Activated naive CD4-positive, alpha-beta T cell treated with anti-CD3 and anti-CD28 coated beads, Interleukin-2, amount 10 ng/mL, durations not matched to agents 7 days and 5 days (primary cell): ENCODE measurements at regions of chr12 and their contacts with region 1.

Region 1: GRCh38 chr12:54993161-54993835 is 8.7 kb upstream of the TESPA1 start:
- DNase-seq: peak; percentile 67
- H3K4me3 Mint-ChIP-seq: no peak overlapping the region
- H3K27ac Mint-ChIP-seq: no peak overlapping the region
- H3K4me1 Mint-ChIP-seq: peaks cover 43% of the 10 kb centered on the region
- H3K27me3 Mint-ChIP-seq: peaks cover 5% of the 10 kb centered on the region

Region 2: DNA sequence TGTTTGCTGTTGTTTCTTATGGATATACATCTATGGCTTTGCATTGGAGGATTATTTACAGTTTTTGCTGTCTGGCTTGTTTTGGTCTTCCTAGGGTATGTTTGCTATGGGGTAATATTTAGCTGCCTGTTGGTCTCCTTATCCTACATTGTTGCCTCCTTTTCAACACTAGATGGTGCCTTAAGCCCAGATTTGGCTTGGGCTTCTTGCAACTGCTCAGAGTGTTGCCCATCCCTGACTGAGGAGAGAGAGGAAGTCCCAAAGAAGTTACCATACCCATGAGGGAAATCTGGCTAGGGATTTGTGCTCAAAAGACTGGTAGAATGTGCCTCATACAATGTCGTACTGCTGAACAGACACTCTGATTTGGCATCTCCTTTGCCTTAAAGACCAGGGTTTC is 233.5 kb before region 1 on chr12:
- CTCF ChIA-PET with region 1: interaction called, 12 read pairs
- DNase-seq: peak; percentile 38
- H3K4me3 Mint-ChIP-seq: no peak overlapping the region
- H3K27ac Mint-ChIP-seq: no peak overlapping the region
- H3K4me1 Mint-ChIP-seq: peaks cover 22% of the 10 kb centered on the region
- H3K27me3 Mint-ChIP-seq: no peaks in the 10 kb centered on the region

Region 3: DNA sequence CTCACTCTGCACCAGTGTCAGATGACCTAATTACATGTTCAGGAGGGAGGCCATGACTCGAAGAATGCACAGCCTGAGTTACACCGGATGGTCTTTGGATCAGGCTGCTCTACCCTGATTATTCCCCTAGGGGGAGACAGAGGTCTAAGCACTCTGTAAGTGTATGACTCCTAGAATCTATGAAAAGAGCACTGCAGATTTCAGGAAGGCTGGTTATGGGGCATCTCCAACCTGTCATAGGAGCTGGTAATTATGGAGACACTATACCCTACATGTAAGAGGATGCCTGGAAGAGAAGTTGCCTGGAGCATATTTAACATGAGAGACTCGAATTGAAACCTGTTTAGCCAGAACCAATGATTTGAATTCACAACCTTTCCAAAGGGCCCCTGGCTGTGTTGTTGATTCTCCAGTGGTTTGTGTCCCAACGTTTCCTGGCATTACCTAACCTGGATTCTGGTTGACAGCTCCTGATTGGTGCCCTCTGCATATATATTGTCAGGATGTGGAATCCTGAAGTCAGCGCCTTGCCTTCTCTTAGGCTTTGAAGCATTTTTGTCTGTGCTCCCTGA is 139.2 kb before region 1 on chr12 and contains the start of gene MUCL1:
- CTCF ChIA-PET with region 1: interaction called, 17 read pairs
- DNase-seq: peak; percentile 81
- H3K4me3 Mint-ChIP-seq: no peak within 1 kb of the TSS
- H3K27ac Mint-ChIP-seq: no peak within 1 kb of the TSS
- H3K4me1 Mint-ChIP-seq: peaks cover 3% of the 10 kb centered on the region
- H3K27me3 Mint-ChIP-seq: peaks cover 7% of the 10 kb centered on the region

Region 4: GRCh38 chr12:54958048-54958658 is 35.1 kb before region 1 on chr12:
- CTCF ChIA-PET with region 1: interaction called, 22 read pairs
- DNase-seq: peak; percentile 65
- H3K4me3 Mint-ChIP-seq: no peak overlapping the region
- H3K27ac Mint-ChIP-seq: no peak overlapping the region
- H3K4me1 Mint-ChIP-seq: peaks cover 73% of the 10 kb centered on the region
- H3K27me3 Mint-ChIP-seq: no peaks in the 10 kb centered on the region

Region 5: DNA sequence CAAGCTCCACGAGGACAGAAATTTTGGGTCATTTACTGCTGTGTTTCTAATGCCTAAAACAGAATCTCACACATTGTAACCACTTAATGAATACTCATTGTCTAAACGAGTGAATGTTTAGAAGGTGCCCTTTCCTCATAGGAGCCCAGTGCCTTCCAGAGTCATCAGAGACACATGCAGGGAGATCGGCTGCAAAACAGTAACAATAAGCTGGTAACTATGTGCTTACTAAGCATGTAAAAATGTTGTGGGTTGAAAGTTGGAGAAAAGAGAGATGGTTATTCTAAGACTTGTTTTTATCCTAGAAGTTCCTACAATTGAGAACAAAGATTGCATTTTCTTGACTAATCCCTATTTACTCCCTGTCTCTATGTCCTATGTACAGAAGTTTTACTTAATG is 16.1 kb before region 1 on chr12:
- CTCF ChIA-PET with region 1: interaction called, 13 read pairs
- DNase-seq: no peak
- H3K4me3 Mint-ChIP-seq: peak overlapping the region; percentile 47
- H3K27ac Mint-ChIP-seq: peak overlapping the region; percentile 84
- H3K4me1 Mint-ChIP-seq: peaks cover 95% of the 10 kb centered on the region
- H3K27me3 Mint-ChIP-seq: no peaks in the 10 kb centered on the region

Region 6: DNA sequence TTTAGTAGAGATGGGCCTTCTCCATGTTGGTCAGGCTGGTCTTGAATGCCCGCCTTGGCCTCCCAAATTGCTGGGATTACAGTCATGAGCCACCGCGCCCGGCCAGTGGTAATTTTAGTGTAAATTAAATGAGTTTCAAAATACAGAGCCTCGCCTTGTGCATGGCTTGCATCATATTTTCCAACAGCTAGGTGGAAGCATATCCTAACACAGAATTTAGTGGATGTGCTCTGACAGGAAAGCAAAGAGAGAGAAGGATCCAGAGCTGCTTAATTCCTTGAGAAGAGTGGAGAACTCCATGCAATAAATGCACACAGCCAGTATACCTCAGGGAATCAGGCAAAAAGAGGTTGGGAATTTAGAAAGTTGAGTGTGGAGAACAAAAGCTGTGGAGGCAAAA is 453.0 kb after region 1 on chr12:
- CTCF ChIA-PET with region 1: no interaction called
- DNase-seq: no peak
- H3K4me3 Mint-ChIP-seq: no peak overlapping the region
- H3K27ac Mint-ChIP-seq: no peak overlapping the region
- H3K4me1 Mint-ChIP-seq: no peaks in the 10 kb centered on the region
- H3K27me3 Mint-ChIP-seq: no peaks in the 10 kb centered on the region